Activated CD4-positive, alpha-beta T cell treated with anti-CD3 and anti-CD28 coated beads for 36 hours (primary cell): ENCODE measurements at regions of chr10 and their contacts with region 1.

Region 1: DNA sequence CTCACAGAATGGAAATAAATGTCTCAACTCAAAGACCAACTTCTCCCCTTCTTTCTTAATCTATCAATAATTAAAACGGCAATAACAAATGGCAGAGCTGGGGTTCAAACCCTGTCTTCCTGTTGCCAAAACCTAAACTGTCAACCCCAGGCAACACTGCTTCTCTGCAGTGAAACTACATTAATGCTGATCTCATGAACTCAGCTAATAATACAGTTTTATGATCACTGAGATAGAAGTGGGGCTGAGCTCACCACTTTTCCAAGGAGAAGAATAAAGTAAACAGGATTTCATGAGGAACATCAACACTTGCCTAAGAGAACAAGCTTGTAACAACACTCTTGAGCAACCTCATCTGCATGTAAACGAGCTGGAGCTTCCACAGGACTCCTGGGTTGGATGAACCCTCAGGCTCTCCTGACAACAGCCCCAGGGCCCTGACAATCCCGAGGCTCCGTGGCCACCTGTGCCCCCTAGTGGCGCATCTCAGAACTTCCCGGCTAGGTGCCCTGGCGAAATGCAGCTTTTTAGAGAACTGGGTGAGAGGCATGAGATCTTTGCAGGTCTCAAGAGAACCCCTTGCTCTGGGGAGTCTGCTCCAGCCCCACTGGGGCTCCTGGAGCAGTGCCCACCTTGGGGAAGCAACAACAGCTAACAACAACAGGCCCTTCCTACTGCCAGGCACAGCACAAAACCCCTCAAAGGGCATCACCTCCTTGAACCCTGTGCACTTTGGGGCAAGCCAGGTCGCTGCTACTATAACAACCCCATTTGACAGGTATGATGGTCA is 169.3 kb downstream of the SH3PXD2A start:
- DNase-seq: peak; percentile 88
- ATAC-seq: peak; percentile 95
- H3K4me3 Mint-ChIP-seq: no peak overlapping the region
- H3K27ac Mint-ChIP-seq: no peak overlapping the region
- H3K4me1 Mint-ChIP-seq: peaks cover under 1% of the 10 kb centered on the region
- H3K27me3 Mint-ChIP-seq: no peaks in the 10 kb centered on the region

Region 2: DNA sequence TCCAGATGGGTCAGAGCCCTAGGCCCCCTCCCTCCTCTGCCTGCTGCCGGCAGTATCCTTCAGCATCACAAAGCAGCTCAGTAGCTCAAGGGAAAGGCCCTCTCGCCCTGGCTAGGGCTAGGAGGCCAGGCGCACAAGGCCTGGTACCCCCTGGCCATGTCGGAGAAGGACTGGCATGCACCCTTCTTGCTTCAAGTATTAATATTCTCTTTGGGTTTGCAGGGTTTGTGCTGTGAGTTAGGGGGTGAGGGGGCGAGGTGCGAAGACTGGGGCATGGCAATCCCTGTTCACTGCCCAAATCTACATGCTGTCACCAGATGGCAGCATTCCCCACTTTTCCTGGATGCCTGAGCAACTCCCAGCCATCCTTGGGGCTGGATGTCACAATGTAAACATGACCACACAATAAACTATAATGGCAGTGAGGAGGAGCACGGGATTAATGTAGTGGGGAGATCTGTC is 87.4 kb before region 1 on chr10:
- CTCF ChIA-PET with region 1: interaction called, 52 read pairs
- POLR2A ChIA-PET with region 1: no interaction called
- intact Hi-C with region 1: loop called in 1 of 2 experiments (anchors 1 kb)
- DNase-seq: peak; percentile 48
- ATAC-seq: peak; percentile 26
- H3K4me3 Mint-ChIP-seq: no peak overlapping the region
- H3K27ac Mint-ChIP-seq: no peak overlapping the region
- H3K4me1 Mint-ChIP-seq: no peaks in the 10 kb centered on the region
- H3K27me3 Mint-ChIP-seq: no peaks in the 10 kb centered on the region

Region 3: GRCh38 chr10:103612462-103613365 is 73.4 kb before region 1 on chr10:
- CTCF ChIA-PET with region 1: interaction called, 13 read pairs
- POLR2A ChIA-PET with region 1: no interaction called
- intact Hi-C with region 1: no loop called
- DNase-seq: no peak
- ATAC-seq: no peak
- H3K4me3 Mint-ChIP-seq: no peak overlapping the region
- H3K27ac Mint-ChIP-seq: no peak overlapping the region
- H3K4me1 Mint-ChIP-seq: no peaks in the 10 kb centered on the region
- H3K27me3 Mint-ChIP-seq: no peaks in the 10 kb centered on the region

Region 4: DNA sequence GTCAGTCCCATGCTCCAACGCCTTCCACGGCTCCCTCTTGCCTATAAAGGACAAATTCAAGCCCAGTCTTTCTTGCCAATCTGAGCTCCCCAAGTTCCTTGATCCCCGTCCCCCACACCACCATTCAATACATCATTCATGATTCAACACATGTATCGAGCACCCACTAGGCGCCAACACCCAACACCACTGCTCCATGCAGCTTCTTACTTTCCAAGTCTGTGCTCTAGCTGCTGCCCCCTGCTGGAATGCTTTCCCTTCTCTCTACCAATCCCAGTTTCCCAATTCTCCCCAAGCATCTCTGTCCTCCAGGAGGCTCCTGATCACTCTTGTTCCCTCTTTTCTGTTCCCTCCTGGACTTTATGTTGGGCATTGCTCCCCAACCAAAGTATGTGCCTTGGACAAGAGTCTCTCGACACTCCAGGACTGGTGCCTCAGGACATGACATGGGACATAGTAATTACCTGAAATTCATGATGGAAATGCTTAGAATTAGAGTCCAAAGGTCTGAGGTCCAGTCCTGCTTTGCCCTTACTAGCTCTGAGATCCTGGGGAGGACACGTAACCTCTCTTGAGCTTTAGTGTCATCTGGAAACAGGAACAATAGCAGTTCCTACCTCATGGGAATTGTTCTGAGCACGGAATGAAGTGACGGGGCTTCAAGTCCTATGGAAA is 19.9 kb before region 1 on chr10:
- CTCF ChIA-PET with region 1: interaction called, 14 read pairs
- POLR2A ChIA-PET with region 1: no interaction called
- intact Hi-C with region 1: no loop called
- DNase-seq: peak; percentile 39
- ATAC-seq: no peak
- H3K4me3 Mint-ChIP-seq: no peak overlapping the region
- H3K27ac Mint-ChIP-seq: no peak overlapping the region
- H3K4me1 Mint-ChIP-seq: peaks cover 11% of the 10 kb centered on the region
- H3K27me3 Mint-ChIP-seq: no peaks in the 10 kb centered on the region

Region 5: GRCh38 chr10:103706047-103706446 is 20.0 kb after region 1 on chr10:
- CTCF ChIA-PET with region 1: interaction called, 13 read pairs
- POLR2A ChIA-PET with region 1: no interaction called
- intact Hi-C with region 1: no loop called
- DNase-seq: no peak
- ATAC-seq: no peak
- H3K4me3 Mint-ChIP-seq: no peak overlapping the region
- H3K27ac Mint-ChIP-seq: no peak overlapping the region
- H3K4me1 Mint-ChIP-seq: no peaks in the 10 kb centered on the region
- H3K27me3 Mint-ChIP-seq: no peaks in the 10 kb centered on the region

Region 6: DNA sequence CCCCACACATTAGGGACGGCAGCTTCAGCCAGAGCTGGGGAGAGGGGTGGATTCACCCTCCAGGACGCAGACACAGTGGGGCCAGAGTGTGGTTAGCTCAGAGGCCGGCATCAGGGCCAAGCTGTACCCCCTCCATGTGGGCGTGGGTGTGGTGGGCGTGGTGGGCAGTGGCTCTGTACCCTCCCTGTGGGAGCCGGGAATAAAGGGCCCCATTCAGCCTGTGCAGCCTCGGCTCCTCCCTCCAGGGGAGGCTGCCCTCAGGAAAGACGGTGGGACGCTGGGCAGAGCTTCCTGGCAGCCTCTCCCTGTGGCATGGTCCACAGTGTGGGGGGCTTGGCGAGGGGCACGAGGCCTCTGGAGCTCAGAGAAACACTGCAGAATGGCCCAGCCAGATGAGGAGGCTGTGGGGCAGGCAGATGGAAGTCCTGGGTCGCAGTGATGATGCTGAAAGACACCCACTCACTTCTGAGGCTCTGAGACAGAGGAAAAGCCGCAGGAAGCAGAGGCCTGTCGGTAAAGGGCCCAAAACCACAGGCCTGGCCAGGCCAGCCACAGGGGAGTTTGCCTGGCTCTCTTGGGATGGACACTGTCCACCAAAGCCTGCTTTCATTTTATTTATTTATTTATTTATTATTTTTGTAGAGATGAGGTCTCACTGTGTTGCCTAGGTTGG is 61.3 kb after region 1 on chr10:
- CTCF ChIA-PET with region 1: no interaction called
- POLR2A ChIA-PET with region 1: no interaction called
- intact Hi-C with region 1: no loop called
- DNase-seq: peak; percentile 38
- ATAC-seq: no peak
- H3K4me3 Mint-ChIP-seq: no peak overlapping the region
- H3K27ac Mint-ChIP-seq: peak overlapping the region; percentile 68
- H3K4me1 Mint-ChIP-seq: peaks cover 45% of the 10 kb centered on the region
- H3K27me3 Mint-ChIP-seq: no peaks in the 10 kb centered on the region

Region 7: DNA sequence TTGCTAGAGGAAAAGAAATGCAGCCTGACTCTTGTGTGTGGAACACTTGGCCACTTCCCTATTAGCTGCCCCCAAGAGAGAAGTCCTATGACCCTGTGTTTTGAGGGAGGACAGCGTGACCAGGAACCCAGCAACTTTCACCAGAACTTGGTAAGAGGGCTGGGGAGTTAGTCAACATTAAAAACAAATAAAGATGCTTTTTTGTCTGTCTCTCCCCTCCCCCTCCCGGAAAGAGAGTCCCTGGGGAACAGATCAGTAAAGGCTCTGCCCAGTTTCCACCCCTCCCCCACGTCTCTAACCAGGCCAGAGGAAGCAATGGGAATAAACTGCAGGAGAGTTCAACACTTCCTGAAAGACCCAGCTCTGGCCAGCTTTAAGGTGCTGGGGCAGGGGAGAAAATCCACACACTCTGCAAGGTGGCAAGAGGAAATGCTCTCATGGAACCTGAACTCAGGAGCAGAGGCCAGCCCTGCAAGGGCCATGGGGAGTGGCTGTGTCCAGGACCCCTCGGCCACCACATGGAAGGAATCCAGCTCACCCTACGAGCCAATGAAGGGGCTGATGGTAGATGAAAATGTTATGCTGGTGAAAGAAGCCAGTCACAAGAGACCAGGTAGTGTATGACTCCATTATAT is 147.8 kb after region 1 on chr10:
- CTCF ChIA-PET with region 1: no interaction called
- POLR2A ChIA-PET with region 1: no interaction called
- intact Hi-C with region 1: no loop called
- DNase-seq: no peak
- ATAC-seq: no peak
- H3K4me3 Mint-ChIP-seq: no peak overlapping the region
- H3K27ac Mint-ChIP-seq: no peak overlapping the region
- H3K4me1 Mint-ChIP-seq: no peaks in the 10 kb centered on the region
- H3K27me3 Mint-ChIP-seq: no peaks in the 10 kb centered on the region